ENCODE measurements at regions of chr14 and their contacts with region 1.

Region 1: DNA sequence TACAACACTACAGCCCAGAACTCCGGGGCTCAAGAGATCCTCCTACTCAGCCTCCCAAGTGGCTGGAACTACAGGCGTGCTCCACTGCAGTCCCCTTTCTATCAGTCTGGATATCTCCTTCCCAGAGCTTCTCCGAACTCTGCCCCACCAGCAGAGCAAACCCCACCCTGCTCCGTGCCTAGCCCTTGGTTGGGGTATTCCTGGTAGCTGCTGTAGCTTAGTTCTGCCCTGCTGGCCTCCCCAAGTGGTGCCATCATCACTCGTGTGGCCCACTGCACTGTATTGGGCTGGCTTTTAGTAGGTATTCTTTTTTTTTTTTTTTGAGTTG is 9.5 kb downstream of the HSP90AA1 start:
- DNase-seq: no peak
- ATAC-seq: peak; percentile 49 to 52; a peak in 5 of 6 replicates
- H3K4me3 ChIP-seq: no peak overlapping the region
- H3K27ac ChIP-seq: no peak overlapping the region
- H3K4me1 ChIP-seq: peaks cover 9% of the 10 kb centered on the region
- CTCF ChIP-seq: no peak
- EP300 ChIP-seq: no peak
- POLR2A ChIP-seq: no peak; the same call in 1 of the 2 replicates
- RAD21 ChIP-seq: no peak

Region 2: DNA sequence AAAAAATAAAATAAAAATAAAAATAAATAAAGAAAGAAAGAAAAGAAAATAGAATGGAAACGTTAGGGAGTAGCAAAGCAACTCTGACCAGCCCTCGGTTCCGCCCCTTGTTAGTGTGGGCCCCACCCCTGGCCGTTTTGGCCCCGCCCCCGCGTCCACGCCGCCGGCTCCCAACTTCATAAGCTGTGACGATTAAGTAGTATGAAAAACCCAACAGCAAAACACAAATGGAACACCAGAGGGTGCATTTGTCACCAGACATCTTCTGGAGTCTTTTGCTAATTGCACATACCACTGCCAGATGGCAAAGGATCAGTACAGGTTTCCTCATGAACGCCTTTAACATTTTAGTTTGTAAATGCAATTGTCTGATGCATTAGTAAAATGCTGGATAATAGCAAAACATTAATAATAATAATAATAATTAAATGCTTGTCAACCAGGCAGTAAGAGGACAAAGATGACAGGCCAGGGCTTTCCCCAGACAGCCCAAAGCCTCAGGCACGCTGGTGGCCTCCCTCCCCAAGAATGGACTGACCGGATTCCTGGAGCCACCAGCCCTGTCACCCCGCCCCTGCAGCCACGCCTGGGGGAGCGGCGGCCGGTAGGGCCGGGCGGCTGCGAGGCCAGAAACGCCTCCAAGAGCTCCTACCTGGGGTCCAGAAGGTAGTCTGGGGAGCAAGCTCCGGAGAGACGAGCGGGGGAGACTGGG is 14.1 kb before region 1 on chr14:
- CTCF ChIA-PET with region 1: interaction called, 17 read pairs
- POLR2A ChIA-PET with region 1: interaction called, 3 read pairs
- DNase-seq: peak; percentile 81 to 89
- ATAC-seq: peak; percentile 83 to 93
- H3K4me3 ChIP-seq: no peak overlapping the region
- H3K27ac ChIP-seq: no peak overlapping the region
- H3K4me1 ChIP-seq: no peaks in the 10 kb centered on the region
- CTCF ChIP-seq: peak; percentile 51
- EP300 ChIP-seq: no peak
- POLR2A ChIP-seq: no peak
- RAD21 ChIP-seq: peak; percentile 59 to 60

Region 3: GRCh38 chr14:102235275-102235897 is 158.0 kb after region 1 on chr14:
- CTCF ChIA-PET with region 1: no interaction called
- POLR2A ChIA-PET with region 1: no interaction called
- DNase-seq: peak; percentile 85 to 97
- ATAC-seq: peak; percentile 91 to 98
- H3K4me3 ChIP-seq: no peak overlapping the region
- H3K27ac ChIP-seq: peak overlapping the region; percentile 61 to 76
- H3K4me1 ChIP-seq: peaks cover 10% of the 10 kb centered on the region
- CTCF ChIP-seq: peak; percentile 92
- EP300 ChIP-seq: no peak
- POLR2A ChIP-seq: no peak
- RAD21 ChIP-seq: peak; percentile 93 to 96